Naive thymus-derived CD4-positive, alpha-beta T cell (primary cell): ENCODE measurements at regions of chr4 and their contacts with region 1.

Region 1: GRCh38 chr4:48141048-48141447 is 7.0 kb upstream of the TXK start:
- DNase-seq: peak in 7 of 9 donors; percentile 16 to 72 (median 49)
- ATAC-seq: peak; percentile 67
- H3K4me3 ChIP-seq: no peak overlapping the region
- H3K4me3 Mint-ChIP-seq: peak overlapping the region in 1 of 10 donors; percentile 4
- H3K27ac ChIP-seq: no peak overlapping the region
- H3K27ac Mint-ChIP-seq: peak overlapping the region in 6 of 9 donors; percentile 6 to 97 (median 44)
- H3K4me1 ChIP-seq: peaks cover 36 to 46% of the 10 kb centered on the region in 2 donors
- H3K4me1 Mint-ChIP-seq: peaks cover 34 to 53% (median 51%) of the 10 kb centered on the region in 7 donors
- H3K27me3 ChIP-seq: no peaks in the 10 kb centered on the region
- H3K27me3 Mint-ChIP-seq: no peaks in the 10 kb centered on the region

Region 2: DNA sequence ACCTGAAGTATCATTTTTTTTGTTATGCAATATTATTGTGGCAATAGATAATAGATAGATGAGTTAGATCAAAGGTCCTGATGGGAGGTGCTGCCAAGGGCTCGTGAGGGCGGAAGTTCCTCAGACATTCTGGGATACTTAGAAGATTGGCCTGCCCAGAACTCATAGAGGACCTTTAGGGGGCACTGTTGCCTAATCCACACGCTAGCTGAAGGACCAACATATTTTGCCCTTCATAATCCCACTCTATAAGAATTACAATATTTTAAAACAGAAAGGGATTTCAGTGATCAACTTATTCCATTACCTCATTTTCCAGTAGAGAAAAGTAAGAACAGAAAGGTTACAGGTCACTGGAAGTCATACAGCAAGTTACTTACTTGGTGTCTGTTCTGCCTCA is 1209.1 kb before region 1 on chr4:
- CTCF ChIA-PET with region 1: no interaction called
- POLR2A ChIA-PET with region 1: no interaction called
- intact Hi-C with region 1: no loop called
- DNase-seq: peak in 1 of 9 donors; percentile 2
- ATAC-seq: no peak
- H3K4me3 ChIP-seq: no peak overlapping the region
- H3K4me3 Mint-ChIP-seq: no peak overlapping the region
- H3K27ac ChIP-seq: no peak overlapping the region
- H3K27ac Mint-ChIP-seq: no peak overlapping the region
- H3K4me1 ChIP-seq: no peaks in the 10 kb centered on the region
- H3K4me1 Mint-ChIP-seq: no peaks in the 10 kb centered on the region
- H3K27me3 ChIP-seq: peaks cover 0 to 2% of the 10 kb centered on the region in 2 donors
- H3K27me3 Mint-ChIP-seq: peaks cover 0 to 15% (median 4%) of the 10 kb centered on the region in 5 donors

Region 3: GRCh38 chr4:47519239-47519883 is 621.7 kb before region 1 on chr4:
- CTCF ChIA-PET with region 1: no interaction called
- POLR2A ChIA-PET with region 1: no interaction called
- intact Hi-C with region 1: no loop called
- DNase-seq: no peak
- ATAC-seq: peak; percentile 32
- H3K4me3 ChIP-seq: no peak overlapping the region
- H3K4me3 Mint-ChIP-seq: no peak overlapping the region
- H3K27ac ChIP-seq: no peak overlapping the region
- H3K27ac Mint-ChIP-seq: no peak overlapping the region
- H3K4me1 ChIP-seq: no peaks in the 10 kb centered on the region
- H3K4me1 Mint-ChIP-seq: peaks cover 0 to 13% (median 8%) of the 10 kb centered on the region in 7 donors
- H3K27me3 ChIP-seq: no peaks in the 10 kb centered on the region
- H3K27me3 Mint-ChIP-seq: no peaks in the 10 kb centered on the region

Region 4: GRCh38 chr4:47686294-47686872 is 454.7 kb before region 1 on chr4:
- CTCF ChIA-PET with region 1: no interaction called
- POLR2A ChIA-PET with region 1: no interaction called
- intact Hi-C with region 1: loop called (anchors 1 to 10 kb)
- DNase-seq: peak; percentile 24 to 61 (median 48)
- ATAC-seq: peak; percentile 87
- H3K4me3 ChIP-seq: no peak overlapping the region
- H3K4me3 Mint-ChIP-seq: no peak overlapping the region
- H3K27ac ChIP-seq: no peak overlapping the region
- H3K27ac Mint-ChIP-seq: no peak overlapping the region
- H3K4me1 ChIP-seq: no peaks in the 10 kb centered on the region
- H3K4me1 Mint-ChIP-seq: no peaks in the 10 kb centered on the region
- H3K27me3 ChIP-seq: no peaks in the 10 kb centered on the region
- H3K27me3 Mint-ChIP-seq: peaks cover 0 to 27% (median 9%) of the 10 kb centered on the region in 5 donors

Region 5: DNA sequence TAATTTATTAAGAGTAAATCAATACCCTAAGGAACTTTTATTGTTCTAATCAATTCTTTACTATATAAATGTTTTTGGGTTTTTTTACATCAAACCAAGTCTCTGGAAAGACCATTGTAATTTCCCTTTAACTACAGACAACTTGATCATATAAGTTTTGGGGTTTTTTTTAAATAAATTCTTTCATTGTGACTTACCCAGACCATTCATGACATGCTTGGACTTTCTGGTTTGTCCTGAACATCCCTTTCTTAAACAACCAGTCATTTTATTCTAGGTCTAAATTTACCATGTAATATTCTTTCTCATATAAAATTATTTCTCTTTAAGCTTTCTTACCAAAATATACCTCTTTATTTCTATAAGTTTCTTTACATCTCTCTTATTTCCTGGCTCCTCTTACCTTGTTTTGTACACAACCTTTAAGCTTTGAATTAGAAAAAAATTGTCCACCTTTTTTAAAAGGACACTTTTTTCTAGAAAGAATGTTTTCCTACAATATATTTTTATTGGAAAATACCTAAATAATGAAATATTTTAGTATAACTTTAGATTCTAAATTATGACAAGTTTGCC is 132.9 kb before region 1 on chr4:
- CTCF ChIA-PET with region 1: interaction called, 6 read pairs
- POLR2A ChIA-PET with region 1: no interaction called
- intact Hi-C with region 1: loop called (anchors 1 kb)
- DNase-seq: no peak
- ATAC-seq: no peak
- H3K4me3 ChIP-seq: no peak overlapping the region
- H3K4me3 Mint-ChIP-seq: no peak overlapping the region
- H3K27ac ChIP-seq: no peak overlapping the region
- H3K27ac Mint-ChIP-seq: no peak overlapping the region
- H3K4me1 ChIP-seq: no peaks in the 10 kb centered on the region
- H3K4me1 Mint-ChIP-seq: no peaks in the 10 kb centered on the region
- H3K27me3 ChIP-seq: no peaks in the 10 kb centered on the region
- H3K27me3 Mint-ChIP-seq: peaks cover 0 to 14% (median 5%) of the 10 kb centered on the region in 5 donors

Region 6: DNA sequence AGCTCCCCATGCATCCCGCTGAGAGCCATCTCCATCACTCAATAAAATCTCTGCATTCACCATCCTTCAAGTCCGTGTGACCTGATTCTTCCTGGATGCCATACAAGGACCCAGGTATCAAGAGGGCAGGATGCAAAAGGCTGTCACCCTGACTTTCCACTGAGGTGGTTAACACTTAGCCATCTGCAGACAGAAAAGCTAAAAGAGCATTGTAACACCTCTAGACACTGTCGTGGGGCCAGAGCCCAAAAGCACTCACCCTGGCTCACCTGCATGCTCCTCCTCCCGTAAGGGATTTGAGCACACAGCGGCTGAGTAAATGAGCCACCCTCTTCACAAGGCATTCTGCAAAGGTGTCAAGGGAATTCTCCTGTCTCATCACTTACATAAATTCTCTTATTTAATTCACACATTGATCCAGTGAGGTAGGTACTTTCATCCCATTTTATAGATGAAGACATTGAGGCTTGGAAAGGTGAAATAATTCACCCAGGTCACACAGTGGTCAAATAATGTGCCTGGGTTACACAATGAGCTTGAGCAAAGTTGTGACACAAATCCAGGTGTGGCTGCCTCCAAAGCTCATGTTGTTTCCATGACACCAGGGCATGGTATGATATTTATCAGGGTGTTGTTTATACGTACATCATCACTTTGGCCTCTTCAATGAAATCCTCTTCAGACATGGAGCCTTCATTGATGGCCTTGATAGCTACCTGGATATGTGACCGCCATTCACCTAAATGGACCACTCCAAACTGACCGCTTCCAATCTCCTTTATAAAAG is 55.0 kb before region 1 on chr4:
- CTCF ChIA-PET with region 1: interaction called, 4 read pairs
- POLR2A ChIA-PET with region 1: interaction called, 3 read pairs
- intact Hi-C with region 1: loop called (anchors 1 to 2 kb)
- DNase-seq: no peak
- ATAC-seq: no peak
- H3K4me3 ChIP-seq: no peak overlapping the region
- H3K4me3 Mint-ChIP-seq: no peak overlapping the region
- H3K27ac ChIP-seq: no peak overlapping the region
- H3K27ac Mint-ChIP-seq: peak overlapping the region in 4 of 9 donors; percentile 36 to 78 (median 56)
- H3K4me1 ChIP-seq: no peaks in the 10 kb centered on the region
- H3K4me1 Mint-ChIP-seq: peaks cover 0 to 40% (median 14%) of the 10 kb centered on the region in 7 donors
- H3K27me3 ChIP-seq: no peaks in the 10 kb centered on the region
- H3K27me3 Mint-ChIP-seq: no peaks in the 10 kb centered on the region

Region 7: DNA sequence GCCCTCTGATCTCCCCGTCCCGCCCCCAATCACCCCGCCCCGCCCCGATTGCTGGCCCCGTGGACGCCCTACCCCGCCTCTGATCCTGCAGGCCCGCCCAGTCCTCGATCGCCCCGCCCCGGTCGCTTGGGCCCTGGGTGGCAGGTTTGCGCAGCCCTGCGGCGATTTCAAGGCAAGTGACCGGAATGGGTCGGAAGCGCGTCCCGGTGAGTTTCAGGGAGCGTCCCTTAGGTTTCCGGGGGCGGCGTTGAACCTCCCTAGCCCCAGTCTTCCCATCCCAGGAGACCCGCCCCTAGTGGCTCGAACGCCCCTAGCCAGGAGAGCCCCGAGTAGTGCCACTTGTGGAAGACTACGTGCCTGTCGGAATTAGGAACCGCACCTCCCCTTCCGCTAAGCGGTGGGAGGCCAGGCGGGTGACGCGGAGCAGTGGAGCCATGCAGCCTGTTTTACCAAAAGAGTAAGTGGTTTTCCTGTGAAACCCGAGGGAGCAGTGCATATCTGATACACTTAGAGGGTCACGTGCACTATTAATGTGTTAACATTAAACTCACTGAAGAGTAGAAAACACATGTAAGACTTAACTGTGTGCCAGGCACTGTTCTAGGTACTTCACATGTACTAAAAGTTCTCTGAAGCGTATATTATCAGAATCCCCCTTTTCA is 128.9 kb after region 1 on chr4:
- CTCF ChIA-PET with region 1: no interaction called
- POLR2A ChIA-PET with region 1: no interaction called
- intact Hi-C with region 1: loop called in 1 of 2 experiments (anchors 5 kb)
- DNase-seq: peak; percentile 48 to 88 (median 69)
- ATAC-seq: peak; percentile 95
- H3K4me3 ChIP-seq: peak overlapping the region; percentile 88
- H3K4me3 Mint-ChIP-seq: peak overlapping the region; percentile 95 to 98 (median 97)
- H3K27ac ChIP-seq: peak overlapping the region; percentile 73
- H3K27ac Mint-ChIP-seq: peak overlapping the region; percentile 20 to 94 (median 86)
- H3K4me1 ChIP-seq: peaks cover 0 to 6% of the 10 kb centered on the region in 2 donors
- H3K4me1 Mint-ChIP-seq: peaks cover 6 to 28% (median 22%) of the 10 kb centered on the region in 7 donors
- H3K27me3 ChIP-seq: no peaks in the 10 kb centered on the region
- H3K27me3 Mint-ChIP-seq: no peaks in the 10 kb centered on the region